T-cell (primary cell): ENCODE measurements at regions of chr11 and their contacts with region 1.

Region 1: DNA sequence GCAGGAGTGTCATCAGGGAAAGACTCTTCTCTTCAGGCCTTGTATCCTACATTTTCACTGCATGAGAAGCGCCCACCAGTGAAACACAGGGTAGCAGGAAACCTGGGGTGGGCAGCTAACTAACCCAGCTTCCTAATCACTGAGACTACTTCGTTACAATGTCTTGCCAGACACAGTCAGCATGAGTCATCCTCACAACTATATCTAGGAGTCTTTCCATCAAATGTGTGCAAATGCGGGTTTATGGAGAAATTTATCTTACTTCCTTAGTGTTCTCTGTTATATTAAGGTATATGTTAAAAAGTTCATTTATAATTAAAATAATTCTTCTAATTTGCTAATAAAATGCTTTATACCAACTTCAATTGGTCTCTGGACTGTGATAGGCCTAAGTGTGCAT is 79.9 kb upstream of the RAB1B start:
- DNase-seq: no peak
- ATAC-seq: no peak
- H3K4me3 ChIP-seq: no peak overlapping the region
- H3K4me3 Mint-ChIP-seq: no peak overlapping the region
- H3K27ac ChIP-seq: no peak overlapping the region
- H3K27ac Mint-ChIP-seq: no peak overlapping the region
- H3K4me1 ChIP-seq: peaks cover 0 to 8% of the 10 kb centered on the region in 2 experiments
- H3K4me1 Mint-ChIP-seq: peaks cover 39 to 58% (median 44%) of the 10 kb centered on the region in 3 donors
- H3K27me3 ChIP-seq: no peaks in the 10 kb centered on the region
- H3K27me3 Mint-ChIP-seq: no peaks in the 10 kb centered on the region

Region 2: DNA sequence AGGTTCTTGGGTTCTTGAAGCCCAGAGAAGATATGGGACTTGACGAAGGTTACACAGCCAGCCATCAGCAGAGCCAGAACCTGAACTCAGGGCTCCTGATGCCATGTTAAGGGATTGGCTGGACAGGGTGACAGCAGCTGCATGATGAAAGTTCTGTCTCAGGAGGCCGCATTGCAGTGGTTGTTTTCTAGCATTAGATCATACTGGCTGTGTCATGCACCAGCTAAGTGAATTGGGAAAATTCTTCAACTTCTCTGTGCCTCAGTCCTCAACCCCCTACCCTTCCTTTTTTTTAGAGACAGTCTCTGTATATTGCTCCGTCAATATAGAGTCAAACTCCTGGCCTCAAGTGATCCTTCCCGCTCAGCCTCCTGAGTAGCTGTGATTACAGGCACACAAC is 625.0 kb before region 1 on chr11:
- CTCF ChIA-PET with region 1: no interaction called
- POLR2A ChIA-PET with region 1: interaction called in 1 of 2 experiments, 11 read pairs
- DNase-seq: no peak
- ATAC-seq: no peak
- H3K4me3 ChIP-seq: no peak overlapping the region
- H3K4me3 Mint-ChIP-seq: peak overlapping the region in 1 of 3 donors; percentile 98
- H3K27ac ChIP-seq: no peak overlapping the region
- H3K27ac Mint-ChIP-seq: peak overlapping the region; percentile 98 to 99
- H3K4me1 ChIP-seq: peaks cover 21 to 79% of the 10 kb centered on the region in 2 experiments
- H3K4me1 Mint-ChIP-seq: peaks cover 66 to 72% (median 67%) of the 10 kb centered on the region in 3 donors
- H3K27me3 ChIP-seq: no peaks in the 10 kb centered on the region
- H3K27me3 Mint-ChIP-seq: no peaks in the 10 kb centered on the region

Region 3: GRCh38 chr11:66063900-66064299 is 124.7 kb before region 1 on chr11:
- CTCF ChIA-PET with region 1: no interaction called
- POLR2A ChIA-PET with region 1: interaction called in 1 of 2 experiments, 14 read pairs
- DNase-seq: no peak
- ATAC-seq: no peak
- H3K4me3 ChIP-seq: no peak overlapping the region
- H3K4me3 Mint-ChIP-seq: no peak overlapping the region
- H3K27ac ChIP-seq: no peak overlapping the region
- H3K27ac Mint-ChIP-seq: peak overlapping the region in 1 of 2 donors; percentile 69
- H3K4me1 ChIP-seq: peaks cover 4 to 10% of the 10 kb centered on the region in 2 experiments
- H3K4me1 Mint-ChIP-seq: peaks cover 39 to 55% (median 44%) of the 10 kb centered on the region in 3 donors
- H3K27me3 ChIP-seq: no peaks in the 10 kb centered on the region
- H3K27me3 Mint-ChIP-seq: no peaks in the 10 kb centered on the region

Region 4: GRCh38 chr11:67099831-67100324 is 911.3 kb after region 1 on chr11:
- CTCF ChIA-PET with region 1: interaction called in 1 of 2 experiments, 13 read pairs
- POLR2A ChIA-PET with region 1: no interaction called
- DNase-seq: no peak
- ATAC-seq: peak in 1 of 4 experiments; percentile 19
- H3K4me3 ChIP-seq: no peak overlapping the region
- H3K4me3 Mint-ChIP-seq: no peak overlapping the region
- H3K27ac ChIP-seq: no peak overlapping the region
- H3K27ac Mint-ChIP-seq: peak overlapping the region; percentile 82 to 85
- H3K4me1 ChIP-seq: peaks cover 11 to 28% of the 10 kb centered on the region in 2 experiments
- H3K4me1 Mint-ChIP-seq: peaks cover 27 to 40% (median 31%) of the 10 kb centered on the region in 3 donors
- H3K27me3 ChIP-seq: no peaks in the 10 kb centered on the region
- H3K27me3 Mint-ChIP-seq: no peaks in the 10 kb centered on the region